Upper lobe of right lung (tissue), 1 donor: ENCODE measurements at regions of chr16 and their contacts with region 1.

Region 1: GRCh38 chr16:35574454-35575431 is 2115.3 kb downstream of the TP53TG3F start:
- DNase-seq: no peak
- ATAC-seq: peak; percentile 5
- H3K4me3 ChIP-seq: no peak overlapping the region
- H3K27ac ChIP-seq: no peak overlapping the region
- H3K4me1 ChIP-seq: no peaks in the 10 kb centered on the region
- H3K27me3 ChIP-seq: no peaks in the 10 kb centered on the region
- CTCF ChIP-seq: no peak

Region 2: DNA sequence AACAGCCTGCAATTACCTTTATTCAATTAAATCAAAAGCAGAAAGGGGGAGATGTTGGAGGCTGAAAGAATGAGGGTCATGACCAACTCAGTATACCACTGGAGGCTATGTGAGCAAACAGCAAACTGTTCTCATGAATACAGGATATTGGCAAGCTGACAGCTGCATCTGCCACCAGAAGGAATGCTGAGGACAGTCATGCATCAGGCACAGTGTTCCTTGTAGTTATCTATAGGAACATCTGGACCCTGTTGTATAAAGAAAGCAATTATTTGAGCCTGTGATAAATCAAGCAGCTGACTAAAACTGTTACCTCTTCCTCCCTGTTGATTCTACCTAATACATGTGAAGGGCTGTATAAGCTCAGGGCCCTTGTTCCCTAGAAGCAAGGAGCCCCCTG is 50.7 kb before region 1 on chr16:
- intact Hi-C with region 1: loop called (anchors 5 kb)
- DNase-seq: no peak
- ATAC-seq: no peak
- H3K4me3 ChIP-seq: no peak overlapping the region
- H3K27ac ChIP-seq: no peak overlapping the region
- H3K4me1 ChIP-seq: no peaks in the 10 kb centered on the region
- H3K27me3 ChIP-seq: no peaks in the 10 kb centered on the region
- CTCF ChIP-seq: no peak